ENCODE measurements at regions of chr10 and their contacts with region 1.

Region 1: DNA sequence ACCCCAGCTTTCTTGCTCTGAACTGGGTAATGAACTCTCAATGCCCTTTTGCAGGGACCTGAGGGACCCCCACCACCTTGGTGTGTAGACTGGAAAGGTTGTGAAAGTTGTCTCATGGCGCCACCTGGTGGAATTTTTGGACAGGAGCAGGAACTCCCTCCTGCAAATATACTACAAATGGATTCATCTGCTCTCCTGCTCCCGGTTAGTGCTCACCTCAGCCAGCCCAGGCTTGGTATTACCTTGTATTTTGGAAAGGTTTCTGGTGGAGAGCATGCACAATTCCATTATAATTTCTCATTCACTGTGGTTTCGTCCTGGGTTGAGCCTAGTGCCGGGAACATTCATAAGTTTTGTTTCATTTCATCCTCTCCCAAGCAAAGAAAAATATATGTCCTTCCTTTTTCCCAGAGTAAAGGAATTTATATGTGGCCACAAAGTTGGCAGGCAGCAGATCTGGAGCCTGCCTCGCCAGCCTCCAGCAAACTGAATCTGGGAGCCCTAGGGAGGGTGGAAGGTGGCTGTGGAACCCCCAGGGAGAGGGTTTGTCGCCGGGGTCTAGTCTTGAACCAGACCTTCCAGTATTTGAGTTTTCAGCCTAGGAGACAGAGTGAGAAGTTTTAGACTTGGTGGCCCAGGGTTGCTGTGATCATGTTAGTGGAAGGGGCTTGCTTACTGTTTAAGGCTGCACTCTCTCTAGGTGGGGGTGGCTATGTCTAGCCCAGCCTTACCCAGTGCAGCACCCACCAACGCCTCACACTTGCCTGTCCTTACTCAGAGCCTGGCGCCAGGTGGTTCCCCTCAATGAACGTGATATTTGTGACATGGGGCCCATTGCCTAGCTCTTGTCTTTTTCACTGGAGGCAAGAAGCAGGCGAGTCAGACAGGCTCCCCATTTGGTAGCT is 9.5 kb downstream of the FAM241B start:
- DNase-seq: peak; percentile 40
- H3K4me3 ChIP-seq: no peak overlapping the region
- H3K27ac ChIP-seq: no peak overlapping the region
- H3K4me1 ChIP-seq: no peaks in the 10 kb centered on the region
- H3K27me3 ChIP-seq: peaks cover 49% of the 10 kb centered on the region
- CTCF ChIP-seq: peak; percentile 88

Region 2: GRCh38 chr10:69348816-69349541 is 290.6 kb before region 1 on chr10:
- intact Hi-C with region 1: no loop called
- DNase-seq: peak; percentile 47
- H3K4me3 ChIP-seq: no peak overlapping the region
- H3K27ac ChIP-seq: peak overlapping the region; percentile 61
- H3K4me1 ChIP-seq: peaks cover 51% of the 10 kb centered on the region
- H3K27me3 ChIP-seq: no peaks in the 10 kb centered on the region
- CTCF ChIP-seq: no peak

Region 3: GRCh38 chr10:69425511-69426298 is 213.8 kb before region 1 on chr10:
- intact Hi-C with region 1: loop called (anchors 10 kb)
- DNase-seq: no peak
- H3K4me3 ChIP-seq: no peak overlapping the region
- H3K27ac ChIP-seq: peak overlapping the region; percentile 29
- H3K4me1 ChIP-seq: peaks cover 14% of the 10 kb centered on the region
- H3K27me3 ChIP-seq: no peaks in the 10 kb centered on the region
- CTCF ChIP-seq: no peak

Region 4: DNA sequence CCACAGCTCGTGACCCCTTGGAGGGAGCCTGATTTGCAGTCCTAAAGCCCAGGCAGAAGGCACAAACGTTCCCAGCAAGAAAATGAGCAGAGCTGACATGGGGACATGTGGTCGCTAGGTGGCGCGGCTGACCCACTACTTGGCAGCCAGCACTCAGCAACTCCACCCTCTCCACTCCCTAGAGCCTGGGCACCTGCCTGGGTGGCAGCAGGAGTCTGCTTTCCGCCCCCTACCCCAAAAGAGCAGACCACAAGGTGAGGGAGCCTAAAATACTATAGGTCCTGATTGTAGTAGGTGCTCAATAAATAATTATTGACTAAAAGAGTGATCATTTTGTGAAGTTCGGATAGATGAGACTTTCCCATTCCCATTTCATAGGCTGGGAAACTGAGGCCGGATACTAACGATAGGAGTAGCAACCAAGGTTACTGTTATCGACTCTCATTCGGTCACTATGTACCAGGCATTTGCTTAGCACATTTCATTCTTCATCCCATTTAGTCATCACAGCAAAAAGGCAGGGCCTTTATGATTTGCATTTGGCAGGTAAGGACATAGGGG is 123.8 kb before region 1 on chr10:
- intact Hi-C with region 1: loop called (anchors 5 kb)
- DNase-seq: peak; percentile 63
- H3K4me3 ChIP-seq: no peak overlapping the region
- H3K27ac ChIP-seq: no peak overlapping the region
- H3K4me1 ChIP-seq: no peaks in the 10 kb centered on the region
- H3K27me3 ChIP-seq: no peaks in the 10 kb centered on the region
- CTCF ChIP-seq: peak; percentile 78

Region 5: GRCh38 chr10:69914398-69915214 is 275.1 kb after region 1 on chr10:
- intact Hi-C with region 1: loop called (anchors 10 kb)
- DNase-seq: peak; percentile 68
- H3K4me3 ChIP-seq: no peak overlapping the region
- H3K27ac ChIP-seq: no peak overlapping the region
- H3K4me1 ChIP-seq: peaks cover 26% of the 10 kb centered on the region
- H3K27me3 ChIP-seq: peaks cover 26% of the 10 kb centered on the region
- CTCF ChIP-seq: peak; percentile 95